Colonic mucosa (tissue), 4 donors: ENCODE measurements at regions of chr15 and their contacts with region 1.

Region 1: GRCh38 chr15:56821721-56822425 is 88.6 kb upstream of the ZNF280D start:
- DNase-seq: peak; percentile 71
- H3K4me3 ChIP-seq: no peak overlapping the region
- H3K27ac ChIP-seq: no peak overlapping the region
- H3K4me1 ChIP-seq: no peaks in the 10 kb centered on the region
- H3K27me3 ChIP-seq: no peaks in the 10 kb centered on the region
- CTCF ChIP-seq: peak; percentile 53

Region 2: DNA sequence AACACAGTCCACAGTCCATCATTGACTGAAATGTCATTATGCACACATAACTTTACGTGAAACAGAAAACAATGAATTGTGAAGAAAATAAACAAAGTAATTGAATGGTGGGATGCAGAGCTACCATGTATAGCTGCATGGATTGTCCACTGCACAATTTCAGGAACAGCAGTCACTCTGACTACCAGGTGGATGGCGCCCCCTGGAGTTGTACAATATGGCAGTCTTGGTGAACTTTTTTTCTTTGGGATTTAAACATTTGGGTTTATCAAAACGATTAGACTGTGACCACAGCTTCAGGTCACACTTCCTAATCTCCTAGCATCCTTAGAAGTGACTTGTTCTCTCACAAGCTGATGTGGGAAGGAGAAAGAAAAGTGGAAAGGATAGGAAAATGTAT is 47.7 kb after region 1 on chr15:
- intact Hi-C with region 1: loop called (anchors 5 kb)
- DNase-seq: peak; percentile 70
- H3K4me3 ChIP-seq: no peak overlapping the region
- H3K27ac ChIP-seq: no peak overlapping the region
- H3K4me1 ChIP-seq: no peaks in the 10 kb centered on the region
- H3K27me3 ChIP-seq: no peaks in the 10 kb centered on the region
- CTCF ChIP-seq: peak; percentile 52

Region 3: DNA sequence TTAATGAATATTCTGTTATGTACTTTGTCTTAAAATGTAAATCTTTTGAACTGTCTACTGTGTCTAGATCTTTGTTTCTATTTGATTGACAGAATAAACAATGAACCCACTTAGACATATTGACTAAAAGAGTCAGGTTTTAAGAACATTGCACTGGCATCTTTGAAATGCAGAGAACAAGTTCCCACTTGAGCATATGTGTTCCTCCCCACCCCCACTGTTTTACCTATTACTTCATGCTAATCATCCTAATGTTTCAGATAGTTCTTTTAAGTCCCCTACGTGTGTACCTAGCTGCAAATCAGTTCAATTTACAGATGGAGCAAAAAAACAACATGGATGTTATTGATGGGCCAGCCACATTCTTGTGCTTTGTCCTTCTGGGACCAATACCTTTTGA is 84.9 kb after region 1 on chr15:
- intact Hi-C with region 1: no loop called
- DNase-seq: no peak
- H3K4me3 ChIP-seq: no peak overlapping the region
- H3K27ac ChIP-seq: no peak overlapping the region
- H3K4me1 ChIP-seq: no peaks in the 10 kb centered on the region
- H3K27me3 ChIP-seq: no peaks in the 10 kb centered on the region
- CTCF ChIP-seq: no peak